HCT116 (cell line): ENCODE measurements at regions of chr22 and their contacts with region 1.

Region 1: DNA sequence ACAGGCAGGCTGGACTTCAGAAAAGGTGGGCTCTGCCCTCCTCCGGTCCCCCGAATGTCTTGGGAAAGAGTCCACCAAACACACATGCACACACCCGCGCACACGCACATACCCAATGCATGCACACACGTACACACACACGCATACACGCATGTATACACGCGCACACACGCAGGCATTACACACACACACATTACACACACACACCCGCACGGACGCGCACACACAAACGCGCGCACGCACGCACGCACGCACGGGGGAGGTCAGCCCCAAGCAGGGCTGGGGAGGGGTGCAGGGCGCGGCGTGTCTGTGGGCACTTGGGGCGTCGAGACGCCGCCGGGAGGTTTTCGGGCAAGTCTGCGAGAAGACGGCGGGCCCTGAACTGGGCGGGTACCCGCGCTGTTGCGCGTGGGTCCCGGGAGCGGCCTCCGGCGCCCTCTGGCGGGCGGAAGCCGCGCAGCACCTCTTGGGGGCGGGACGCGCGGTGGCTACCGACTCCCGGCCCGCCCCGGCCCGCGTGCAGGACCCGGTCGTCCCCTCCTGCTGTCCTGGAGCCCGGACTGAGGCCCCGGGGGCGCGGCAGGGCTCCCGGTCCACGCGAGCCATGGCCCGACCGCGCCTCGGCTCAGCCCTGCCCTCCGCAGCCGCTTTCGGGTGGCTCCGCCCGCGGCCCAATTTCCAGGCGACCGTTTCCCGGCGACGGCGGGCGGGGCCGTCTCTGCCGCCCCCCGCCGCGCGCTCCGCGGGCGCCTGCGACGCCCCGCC is 3.6 kb downstream of the SEPTIN5 start:
- DNase-seq: no peak
- ATAC-seq: peak; percentile 89
- H3K4me3 ChIP-seq: peak overlapping the region; percentile 20 to 52
- H3K27ac ChIP-seq: peak overlapping the region; percentile 84; the same call in 1 of the 2 replicates
- H3K4me1 ChIP-seq: peaks cover 10 to 33% of the 10 kb centered on the region in 2 experiments
- H3K27me3 ChIP-seq: no peaks in the 10 kb centered on the region
- CTCF ChIP-seq: peak; percentile 55 to 73 (median 61); a peak in 5 of 6 replicates
- POLR2A ChIP-seq: no peak
- RAD21 ChIP-seq: peak; percentile 81

Region 2: DNA sequence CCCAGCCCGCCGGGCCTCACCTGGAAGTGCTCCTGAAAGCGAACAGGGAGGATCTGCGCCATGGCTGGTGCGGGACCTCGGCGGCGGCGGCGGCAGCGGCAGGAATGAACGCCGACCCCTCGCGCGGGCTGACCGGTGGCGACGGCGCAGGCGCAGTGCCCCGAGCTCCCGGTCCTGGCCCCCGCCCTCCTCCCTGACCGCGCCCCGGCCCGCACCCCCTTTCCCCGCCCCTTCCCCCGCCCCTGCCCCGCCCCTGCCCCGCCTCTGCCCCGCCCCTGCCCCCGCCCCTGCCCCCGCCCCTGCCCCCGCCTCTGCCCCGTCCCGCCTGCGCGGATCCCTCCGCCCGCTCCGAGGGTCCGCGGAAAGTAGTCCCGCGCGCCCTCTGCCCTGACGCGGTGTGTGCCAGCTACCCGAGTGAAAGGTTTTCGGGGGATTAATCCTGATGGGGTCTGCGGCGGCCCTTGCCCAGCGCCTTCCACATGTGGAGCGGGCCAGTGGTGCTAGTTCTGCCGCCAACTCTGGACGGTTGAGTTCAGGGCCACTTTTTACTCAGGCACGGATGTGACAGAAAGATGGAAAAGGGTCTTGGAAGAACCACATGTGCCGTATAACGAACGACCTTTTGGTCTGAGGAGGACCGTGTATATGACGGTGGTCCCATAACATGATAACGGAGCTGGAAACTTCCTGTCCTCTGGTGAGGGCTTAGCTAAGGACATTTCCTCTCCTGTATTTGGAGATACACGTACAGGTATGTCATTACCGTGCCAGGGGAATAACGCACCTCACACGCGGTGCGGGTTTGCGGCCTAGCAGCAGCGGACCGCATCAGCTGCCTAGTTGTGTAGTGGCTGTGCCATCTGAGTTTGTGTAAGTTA is 426.1 kb before region 1 on chr22 and contains the start of gene CLTCL1:
- CTCF ChIA-PET with region 1: no interaction called
- POLR2A ChIA-PET with region 1: no interaction called
- RAD21 ChIA-PET with region 1: no interaction called
- intact Hi-C with region 1: loop called (anchors 10 kb)
- DNase-seq: peak; percentile 38
- ATAC-seq: peak; percentile 87
- H3K4me3 ChIP-seq: peak within 1 kb of the TSS; percentile 65 to 75
- H3K27ac ChIP-seq: peak within 1 kb of the TSS; percentile 63; the same call in 1 of the 2 replicates
- H3K4me1 ChIP-seq: peaks cover 9 to 21% of the 10 kb centered on the region in 2 experiments
- H3K27me3 ChIP-seq: no peaks in the 10 kb centered on the region
- CTCF ChIP-seq: no peak
- POLR2A ChIP-seq: peak; percentile 66
- RAD21 ChIP-seq: no peak
- total RNA-seq, gene CLTCL1: 7.1 TPM

Region 3: DNA sequence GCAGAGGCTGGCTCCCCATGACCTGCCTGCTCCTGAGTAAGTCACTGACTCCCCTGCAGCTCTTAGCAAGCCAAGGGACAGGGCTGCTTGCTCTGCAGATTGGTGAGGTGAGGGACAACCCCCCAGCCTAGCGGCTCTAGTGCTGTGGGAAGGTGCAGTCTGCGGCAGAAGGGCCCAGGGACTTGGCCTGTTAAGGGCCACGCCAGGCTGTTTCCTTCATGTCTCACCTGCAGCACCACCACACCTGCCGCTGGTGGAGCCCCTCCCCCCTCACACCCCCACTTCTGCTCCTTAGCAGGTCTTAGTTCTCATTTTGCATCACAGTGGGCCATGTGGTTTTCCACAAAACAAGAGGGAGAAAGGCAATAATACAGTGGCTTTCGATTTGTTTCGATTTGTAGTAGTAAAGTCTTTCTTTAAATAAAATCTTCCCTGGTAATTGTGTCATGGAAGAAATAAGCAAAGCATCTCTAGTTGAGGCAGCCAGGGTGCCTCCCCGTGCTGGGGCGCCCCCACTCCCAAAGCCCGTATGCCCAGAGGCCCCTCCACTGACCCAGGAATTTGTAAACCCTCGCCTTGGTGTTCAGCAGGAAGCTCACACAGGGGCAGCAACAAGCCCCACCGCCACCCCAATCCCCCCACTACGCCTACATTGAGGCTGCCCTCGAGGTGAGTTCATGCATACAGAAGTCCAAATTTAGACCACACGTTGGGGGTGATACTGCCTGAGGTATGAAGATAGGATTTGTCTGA is 107.2 kb before region 1 on chr22:
- CTCF ChIA-PET with region 1: no interaction called
- POLR2A ChIA-PET with region 1: no interaction called
- RAD21 ChIA-PET with region 1: no interaction called
- intact Hi-C with region 1: no loop called
- DNase-seq: no peak
- ATAC-seq: no peak
- H3K4me3 ChIP-seq: no peak overlapping the region
- H3K27ac ChIP-seq: no peak overlapping the region
- H3K4me1 ChIP-seq: no peaks in the 10 kb centered on the region
- H3K27me3 ChIP-seq: no peaks in the 10 kb centered on the region; the same call in 1 of the 2 replicates
- CTCF ChIP-seq: no peak
- POLR2A ChIP-seq: no peak
- RAD21 ChIP-seq: no peak

Region 4: DNA sequence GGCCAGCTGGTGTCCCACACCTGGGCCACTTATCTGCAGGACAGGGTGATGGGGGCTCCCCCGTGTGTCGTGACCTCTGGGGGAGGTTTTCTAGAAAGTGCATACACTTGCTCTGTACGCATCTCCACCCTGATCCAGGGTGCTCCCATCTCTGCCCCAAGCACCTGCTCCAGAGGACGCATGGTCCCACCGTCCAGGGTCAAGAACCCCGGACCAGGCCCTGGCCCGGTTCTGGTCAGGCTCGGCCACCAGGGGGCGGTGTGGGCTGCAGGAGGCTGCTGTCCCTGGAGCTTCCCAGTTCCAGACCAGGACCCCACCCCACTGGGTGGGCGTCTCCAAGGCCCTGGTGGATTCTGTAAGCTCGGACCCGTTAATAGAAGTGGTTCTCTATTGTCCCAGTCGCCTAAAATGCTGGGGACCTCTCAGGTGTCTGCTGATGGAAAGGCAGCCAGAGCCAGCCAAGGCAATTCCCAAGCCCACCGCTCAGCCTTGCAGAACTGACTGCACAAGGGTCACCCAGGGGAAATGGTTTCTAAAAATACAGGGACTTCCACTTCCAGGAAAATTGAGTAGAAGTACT is 38.3 kb before region 1 on chr22:
- CTCF ChIA-PET with region 1: interaction called, 4 read pairs
- POLR2A ChIA-PET with region 1: no interaction called
- RAD21 ChIA-PET with region 1: no interaction called
- intact Hi-C with region 1: loop called (anchors 5 kb)
- DNase-seq: no peak
- ATAC-seq: peak; percentile 95
- H3K4me3 ChIP-seq: no peak overlapping the region
- H3K27ac ChIP-seq: no peak overlapping the region
- H3K4me1 ChIP-seq: no peaks in the 10 kb centered on the region
- H3K27me3 ChIP-seq: no peaks in the 10 kb centered on the region
- CTCF ChIP-seq: peak; percentile 56 to 92 (median 88); a peak in 5 of 6 replicates
- POLR2A ChIP-seq: no peak
- RAD21 ChIP-seq: peak; percentile 64